OCI-LY7 (cell line): ENCODE measurements at regions of chr11 and their contacts with region 1.

Region 1: GRCh38 chr11:727859-728748 is 19.2 kb upstream of the TALDO1 start:
- DNase-seq: peak; percentile 73
- H3K4me3 ChIP-seq: no peak overlapping the region
- H3K27ac ChIP-seq: no peak overlapping the region
- H3K4me1 ChIP-seq: peaks cover 39% of the 10 kb centered on the region
- CTCF ChIP-seq: peak; percentile 92

Region 2: DNA sequence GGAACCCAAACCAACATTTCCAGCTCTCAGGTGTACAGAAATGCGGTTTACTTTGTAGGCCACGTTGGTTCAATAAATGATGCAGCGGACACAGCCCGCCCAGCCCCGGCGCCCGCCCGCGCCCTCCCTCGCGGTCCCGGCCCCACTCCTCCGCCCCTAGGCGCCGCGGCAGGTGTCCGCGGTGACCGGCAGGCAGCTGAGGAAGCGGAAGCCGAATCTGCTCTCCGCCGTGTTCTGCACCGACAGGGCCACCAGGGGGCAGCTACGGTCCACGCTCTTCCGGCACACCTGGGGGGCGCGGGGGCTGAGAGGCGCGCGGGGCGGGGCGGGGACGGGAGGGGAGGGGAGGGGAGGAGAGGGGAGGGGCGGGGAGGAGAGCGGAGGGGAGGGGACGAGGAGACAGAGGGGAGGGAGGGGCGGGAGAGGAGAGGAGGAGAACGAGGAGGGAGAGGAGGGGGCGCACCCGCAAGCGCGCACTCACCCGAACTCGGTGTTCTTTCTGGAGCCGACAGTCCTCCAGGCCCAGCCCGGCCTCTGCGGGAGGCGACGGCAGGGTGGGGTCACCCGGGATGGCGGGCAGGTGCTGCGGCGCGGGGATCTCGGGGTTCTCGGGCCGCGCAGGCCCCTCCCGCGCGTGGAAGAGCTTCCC is 173.2 kb before region 1 on chr11:
- CTCF ChIA-PET with region 1: interaction called, 9 read pairs
- POLR2A ChIA-PET with region 1: no interaction called
- intact Hi-C with region 1: loop called (anchors 5 kb)
- DNase-seq: peak; percentile 91
- H3K4me3 ChIP-seq: peak overlapping the region; percentile 66
- H3K27ac ChIP-seq: no peak overlapping the region
- H3K4me1 ChIP-seq: peaks cover 30% of the 10 kb centered on the region
- CTCF ChIP-seq: peak; percentile 61

Region 3: GRCh38 chr11:639330-639955 is 88.7 kb before region 1 on chr11:
- CTCF ChIA-PET with region 1: no interaction called
- POLR2A ChIA-PET with region 1: no interaction called
- intact Hi-C with region 1: no loop called
- DNase-seq: no peak
- H3K4me3 ChIP-seq: no peak overlapping the region
- H3K27ac ChIP-seq: no peak overlapping the region
- H3K4me1 ChIP-seq: peaks cover 9% of the 10 kb centered on the region
- CTCF ChIP-seq: no peak

Region 4: DNA sequence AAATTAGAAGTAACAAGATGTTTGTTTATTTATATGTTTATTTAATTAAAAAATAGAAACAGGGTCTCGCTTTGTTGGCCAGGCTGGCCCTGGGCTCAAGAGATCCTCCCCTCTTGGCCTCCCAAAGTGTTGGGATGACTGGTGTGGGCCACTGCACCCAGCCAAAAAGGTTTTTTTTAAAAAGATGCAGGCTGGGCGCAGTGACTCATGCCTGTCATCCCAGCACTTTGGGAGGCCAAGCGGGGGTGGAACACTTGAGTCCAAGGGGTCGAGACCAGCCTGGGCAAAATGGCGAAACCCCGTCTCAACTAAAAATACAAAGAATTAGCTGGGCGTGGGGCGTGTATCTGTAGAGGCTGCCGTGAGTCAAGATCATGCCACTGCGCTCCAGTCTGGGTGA is 77.6 kb before region 1 on chr11:
- CTCF ChIA-PET with region 1: no interaction called
- POLR2A ChIA-PET with region 1: no interaction called
- intact Hi-C with region 1: no loop called
- DNase-seq: no peak
- H3K4me3 ChIP-seq: no peak overlapping the region
- H3K27ac ChIP-seq: no peak overlapping the region
- H3K4me1 ChIP-seq: no peaks in the 10 kb centered on the region
- CTCF ChIP-seq: no peak

Region 5: DNA sequence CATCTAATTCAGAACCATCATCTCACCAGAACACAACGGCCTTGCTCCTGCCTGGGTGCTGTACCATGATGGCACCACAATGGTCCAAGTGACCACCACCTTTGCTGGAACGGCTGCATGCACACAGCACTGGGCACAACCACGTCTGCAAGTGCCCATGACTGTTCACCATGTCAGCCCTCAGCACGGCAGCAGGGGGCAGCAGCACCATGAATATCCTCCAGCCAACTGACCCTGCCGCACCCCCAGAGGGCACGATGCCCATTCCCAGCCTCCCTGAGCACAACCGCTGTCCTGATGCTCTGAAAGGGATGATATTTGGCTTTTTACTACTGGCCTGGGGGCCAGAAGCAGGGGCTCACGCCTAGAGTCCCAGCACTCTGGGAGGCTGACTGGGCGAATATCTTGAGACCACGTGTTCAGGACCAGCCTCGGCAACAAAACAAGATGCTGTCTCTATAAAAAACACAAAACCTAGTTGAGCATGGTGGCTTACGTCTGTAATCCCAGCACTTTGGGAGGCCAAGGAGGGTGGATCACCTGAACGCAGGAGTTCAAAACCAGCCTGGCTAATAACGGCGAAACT is 65.3 kb before region 1 on chr11:
- CTCF ChIA-PET with region 1: no interaction called
- POLR2A ChIA-PET with region 1: no interaction called
- intact Hi-C with region 1: loop called (anchors 1 kb)
- DNase-seq: peak; percentile 53
- H3K4me3 ChIP-seq: no peak overlapping the region
- H3K27ac ChIP-seq: no peak overlapping the region
- H3K4me1 ChIP-seq: peaks cover 9% of the 10 kb centered on the region
- CTCF ChIP-seq: peak; percentile 82

Region 6: GRCh38 chr11:680476-680875 is 47.6 kb before region 1 on chr11:
- CTCF ChIA-PET with region 1: no interaction called
- POLR2A ChIA-PET with region 1: no interaction called
- intact Hi-C with region 1: no loop called
- DNase-seq: no peak
- H3K4me3 ChIP-seq: no peak overlapping the region
- H3K27ac ChIP-seq: no peak overlapping the region
- H3K4me1 ChIP-seq: no peaks in the 10 kb centered on the region
- CTCF ChIP-seq: no peak

Region 7: DNA sequence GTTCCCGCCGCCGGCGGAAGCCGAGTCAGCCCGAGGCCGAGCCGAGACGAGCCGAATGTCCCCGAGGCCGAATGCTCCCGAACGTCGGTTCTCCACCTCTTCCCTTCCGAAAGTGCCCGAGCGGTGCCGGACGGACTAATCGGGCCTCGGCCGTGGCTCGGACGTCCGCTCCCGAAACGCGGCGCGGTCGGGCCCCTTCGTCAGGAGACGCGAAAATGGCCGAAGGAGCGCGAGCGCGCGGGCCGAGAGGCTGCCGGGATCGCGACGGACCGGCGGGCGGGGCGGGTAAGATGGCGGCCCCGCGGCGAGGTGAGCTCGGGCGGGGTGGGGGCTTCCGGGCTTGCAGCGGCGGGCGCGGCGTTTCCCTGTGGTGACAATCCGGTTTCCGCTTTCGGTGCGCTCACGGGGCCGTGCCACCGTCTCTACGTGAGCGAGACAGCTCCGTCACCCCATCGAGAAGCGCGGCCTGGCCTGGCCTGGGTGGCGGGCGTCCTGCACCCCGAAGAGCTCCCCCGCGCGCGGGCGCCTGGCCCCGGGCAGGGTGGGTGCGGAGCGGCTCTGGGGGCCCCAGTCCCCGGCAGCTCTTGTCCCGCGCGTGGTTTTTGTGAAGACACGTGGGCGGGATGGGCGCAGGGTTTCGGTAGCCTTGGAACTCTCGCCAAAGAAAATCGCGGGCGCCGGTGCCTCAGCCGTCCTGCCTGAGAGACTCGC is 32.4 kb before region 1 on chr11 and contains the start of gene TMEM80:
- CTCF ChIA-PET with region 1: interaction called, 26 read pairs
- POLR2A ChIA-PET with region 1: interaction called, 5 read pairs
- intact Hi-C with region 1: loop called (anchors 1 kb)
- DNase-seq: peak; percentile 99
- H3K4me3 ChIP-seq: peak within 1 kb of the TSS; percentile 83
- H3K27ac ChIP-seq: peak within 1 kb of the TSS; percentile 88
- H3K4me1 ChIP-seq: peaks cover 37% of the 10 kb centered on the region
- CTCF ChIP-seq: no peak
- total RNA-seq, gene TMEM80: 52.8 and 56.8 TPM in 2 replicates

Region 8: DNA sequence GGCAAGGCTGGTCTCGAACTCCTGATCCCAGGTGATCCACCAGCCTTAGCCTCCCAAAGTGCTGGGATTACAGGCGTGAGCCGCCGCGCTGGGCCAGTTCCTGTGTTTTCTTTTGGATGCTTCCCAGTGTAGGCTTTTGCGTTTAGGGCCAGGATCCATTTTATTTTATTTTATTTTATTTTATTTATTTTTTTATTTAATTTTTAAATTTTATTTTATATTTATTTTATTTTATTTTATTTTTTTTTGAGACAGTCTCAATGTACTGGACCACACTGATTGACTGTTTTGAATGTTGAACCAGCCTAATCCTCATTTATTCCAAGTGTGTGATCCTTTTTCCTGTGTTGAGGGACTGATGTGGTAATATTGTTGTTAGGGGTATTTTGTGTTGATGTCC is 13.7 kb before region 1 on chr11:
- CTCF ChIA-PET with region 1: no interaction called
- POLR2A ChIA-PET with region 1: no interaction called
- intact Hi-C with region 1: no loop called
- DNase-seq: no peak
- H3K4me3 ChIP-seq: no peak overlapping the region
- H3K27ac ChIP-seq: no peak overlapping the region
- H3K4me1 ChIP-seq: no peaks in the 10 kb centered on the region
- CTCF ChIP-seq: no peak

Region 9: DNA sequence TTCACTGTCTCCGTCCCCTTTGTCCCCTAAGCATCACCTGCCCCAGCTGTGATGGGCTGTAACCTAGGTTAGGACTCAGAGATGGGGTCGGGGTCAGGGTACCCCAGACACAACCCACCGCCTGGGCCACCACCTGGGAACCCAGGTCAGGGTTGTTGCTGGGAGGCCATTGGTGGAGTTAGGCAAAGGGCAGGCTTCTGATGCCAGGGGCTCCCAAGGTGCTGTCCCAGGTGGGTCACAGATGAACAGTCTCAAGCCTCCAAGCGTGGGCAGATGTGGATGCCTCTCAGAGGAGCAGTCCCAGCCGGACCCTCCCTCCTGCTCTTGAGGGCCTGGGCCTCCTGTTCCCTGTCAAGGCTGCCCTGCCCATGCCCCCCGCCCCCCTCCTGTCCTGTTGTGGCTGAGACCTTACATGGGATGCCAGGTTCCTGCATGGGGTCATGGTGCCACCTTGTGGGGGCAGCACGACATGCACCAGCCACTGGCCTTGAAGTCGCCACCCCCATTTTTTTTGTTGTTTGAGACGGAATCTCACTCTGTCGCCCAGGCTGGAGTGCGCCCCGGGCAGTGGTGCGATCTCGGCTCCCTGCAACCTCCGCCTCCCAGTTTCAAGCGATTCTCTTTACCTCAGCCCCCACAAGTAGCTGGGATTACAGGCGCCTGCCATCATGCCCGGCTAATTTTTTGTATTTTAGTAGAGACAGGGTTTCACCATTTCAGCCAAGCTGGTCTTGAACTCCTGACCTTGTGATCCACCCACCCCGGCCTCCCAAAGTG is 37.1 kb after region 1 on chr11:
- CTCF ChIA-PET with region 1: no interaction called
- POLR2A ChIA-PET with region 1: no interaction called
- intact Hi-C with region 1: loop called (anchors 1 kb)
- DNase-seq: peak; percentile 65
- H3K4me3 ChIP-seq: no peak overlapping the region
- H3K27ac ChIP-seq: no peak overlapping the region
- H3K4me1 ChIP-seq: no peaks in the 10 kb centered on the region
- CTCF ChIP-seq: peak; percentile 75